ENCODE measurements at regions of chr11 and their contacts with region 1.

Region 1: GRCh38 chr11:122655527-122656072 is at the start of gene UBASH3B:
- H3K4me3 Mint-ChIP-seq: peak within 1 kb of the TSS; percentile 85
- H3K27ac Mint-ChIP-seq: peak within 1 kb of the TSS; percentile 94
- H3K4me1 Mint-ChIP-seq: peaks cover 50% of the 10 kb centered on the region
- H3K27me3 Mint-ChIP-seq: peaks cover 9% of the 10 kb centered on the region

Region 2: GRCh38 chr11:122563761-122564160 is 91.8 kb before region 1 on chr11:
- intact Hi-C with region 1: no loop called
- H3K4me3 Mint-ChIP-seq: no peak overlapping the region
- H3K27ac Mint-ChIP-seq: no peak overlapping the region
- H3K4me1 Mint-ChIP-seq: no peaks in the 10 kb centered on the region
- H3K27me3 Mint-ChIP-seq: peaks cover 8% of the 10 kb centered on the region

Region 3: GRCh38 chr11:122697636-122698167 is 42.1 kb after region 1 on chr11:
- intact Hi-C with region 1: loop called (anchors 5 kb)
- H3K4me3 Mint-ChIP-seq: peak overlapping the region; percentile 37
- H3K27ac Mint-ChIP-seq: peak overlapping the region; percentile 52
- H3K4me1 Mint-ChIP-seq: peaks cover 52% of the 10 kb centered on the region
- H3K27me3 Mint-ChIP-seq: no peaks in the 10 kb centered on the region

Region 4: DNA sequence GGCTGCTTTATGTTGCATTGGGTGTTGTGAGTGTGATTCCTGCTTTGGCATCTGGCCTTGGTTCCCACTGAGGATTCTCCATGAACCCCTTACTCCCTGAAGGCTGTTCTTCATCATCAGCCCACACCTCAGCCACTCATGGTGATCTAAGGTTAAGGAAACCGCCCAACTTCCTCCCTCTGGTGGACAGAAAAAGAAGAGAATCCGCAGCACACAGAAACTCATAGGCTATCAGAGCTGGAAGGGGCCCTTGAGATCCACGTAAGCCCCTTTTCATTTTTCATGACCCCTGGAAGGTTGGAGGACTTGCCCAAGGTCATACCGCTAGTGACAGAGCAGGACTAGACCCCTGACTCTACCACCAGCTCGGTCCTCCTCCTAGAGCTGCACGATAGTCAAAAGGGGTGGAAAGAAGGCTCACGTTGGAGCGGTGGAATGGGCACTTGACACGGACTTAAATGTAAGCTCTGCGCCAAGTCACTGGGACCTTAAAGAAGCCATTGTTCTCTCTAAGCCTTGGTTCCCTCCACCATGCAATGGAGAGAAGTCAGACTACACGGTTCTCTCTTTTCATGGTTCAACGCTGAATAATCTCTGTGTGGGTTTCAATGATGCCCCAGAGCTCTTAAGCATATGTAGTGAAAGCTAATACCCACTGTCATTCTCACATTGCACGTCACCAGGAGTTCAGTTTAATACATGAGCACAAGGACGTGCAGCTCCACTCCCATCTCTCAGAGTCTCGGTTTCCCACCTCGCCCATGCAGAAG is 99.1 kb after region 1 on chr11:
- intact Hi-C with region 1: loop called (anchors 1 kb)
- H3K4me3 Mint-ChIP-seq: peak overlapping the region; percentile 6
- H3K27ac Mint-ChIP-seq: peak overlapping the region; percentile 80
- H3K4me1 Mint-ChIP-seq: peaks cover 74% of the 10 kb centered on the region
- H3K27me3 Mint-ChIP-seq: no peaks in the 10 kb centered on the region

Region 5: GRCh38 chr11:123062158-123062891 is 406.7 kb after region 1 on chr11:
- intact Hi-C with region 1: loop called (anchors 10 kb)
- H3K4me3 Mint-ChIP-seq: peak overlapping the region; percentile 95
- H3K27ac Mint-ChIP-seq: peak overlapping the region; percentile 99
- H3K4me1 Mint-ChIP-seq: peaks cover 38% of the 10 kb centered on the region
- H3K27me3 Mint-ChIP-seq: no peaks in the 10 kb centered on the region